Activated CD4-positive, alpha-beta T cell treated with anti-CD3 and anti-CD28 coated beads for 36 hours (primary cell): ENCODE measurements at regions of chr18 and their contacts with region 1.

Region 1: DNA sequence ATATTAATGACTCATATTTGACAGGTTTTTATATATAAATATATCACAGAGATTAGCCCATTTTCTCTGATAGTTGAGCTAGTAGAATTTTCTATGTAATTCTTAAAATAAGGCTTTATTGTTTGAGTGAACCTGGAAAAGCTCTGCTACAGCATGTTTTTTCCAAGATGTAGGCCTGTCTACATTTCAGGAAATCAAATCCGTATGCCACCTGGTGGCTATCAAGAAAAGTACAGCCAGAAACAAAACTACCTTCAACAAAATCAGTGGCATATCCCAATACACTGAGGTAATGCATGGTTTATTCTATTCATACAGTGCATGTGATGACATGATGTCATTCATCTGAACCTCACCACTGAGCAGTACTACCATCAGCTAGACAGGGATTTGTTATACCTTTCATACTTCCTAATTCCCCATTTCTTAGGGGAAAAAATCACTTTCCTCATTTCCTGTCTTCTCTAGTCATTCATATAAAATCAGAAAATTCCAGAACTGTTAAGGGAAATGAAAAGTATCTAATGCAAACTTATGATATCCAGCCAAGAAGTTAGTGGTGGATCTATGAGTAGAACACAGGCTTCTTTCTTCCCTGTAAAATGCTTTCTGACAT is 310.4 kb upstream of the SYT4 start:
- DNase-seq: no peak
- ATAC-seq: peak; percentile 36
- H3K4me3 Mint-ChIP-seq: no peak overlapping the region
- H3K27ac Mint-ChIP-seq: no peak overlapping the region
- H3K4me1 Mint-ChIP-seq: no peaks in the 10 kb centered on the region
- H3K27me3 Mint-ChIP-seq: no peaks in the 10 kb centered on the region

Region 2: DNA sequence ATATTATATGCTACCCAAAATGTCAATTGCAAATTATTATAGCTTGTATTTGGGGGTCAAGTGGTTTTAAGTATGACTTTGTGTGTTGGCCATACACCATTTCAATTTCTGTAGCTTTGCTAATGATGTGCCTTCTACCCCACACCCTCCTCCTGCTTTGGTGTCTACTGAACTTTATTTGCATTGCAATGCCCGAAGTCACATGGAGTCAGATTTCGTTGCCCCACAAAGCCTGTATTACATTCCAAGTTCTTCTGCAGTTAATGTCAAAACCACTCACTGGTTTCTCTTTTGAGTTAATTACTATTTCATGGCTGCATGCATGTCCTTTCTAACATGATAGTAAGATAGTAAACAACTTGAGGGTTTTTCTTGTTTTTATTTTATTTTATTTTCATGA is 1001.0 kb before region 1 on chr18:
- CTCF ChIA-PET with region 1: no interaction called
- POLR2A ChIA-PET with region 1: no interaction called
- intact Hi-C with region 1: loop called in 1 of 2 experiments (anchors 10 kb)
- DNase-seq: no peak
- ATAC-seq: no peak
- H3K4me3 Mint-ChIP-seq: no peak overlapping the region
- H3K27ac Mint-ChIP-seq: no peak overlapping the region
- H3K4me1 Mint-ChIP-seq: no peaks in the 10 kb centered on the region
- H3K27me3 Mint-ChIP-seq: no peaks in the 10 kb centered on the region

Region 3: DNA sequence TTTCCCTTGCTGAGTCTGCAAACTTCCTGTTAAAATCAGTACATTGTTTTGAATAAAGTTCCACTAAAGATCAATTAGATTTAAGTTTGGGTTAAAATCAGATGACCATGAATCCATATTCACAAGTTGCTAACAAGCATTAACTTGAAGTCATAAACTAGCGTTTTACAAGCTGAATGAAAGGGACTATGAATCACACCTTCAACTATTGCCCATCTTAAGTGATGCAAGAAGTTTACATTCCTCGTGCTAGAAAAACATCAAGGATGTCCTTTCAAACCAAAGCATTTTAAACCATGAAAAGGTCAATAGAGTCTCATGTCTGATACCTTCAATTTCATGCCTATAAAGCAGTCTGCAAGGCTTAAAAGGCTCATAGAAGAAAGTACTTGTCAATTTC is 53.1 kb before region 1 on chr18:
- CTCF ChIA-PET with region 1: no interaction called
- POLR2A ChIA-PET with region 1: no interaction called
- intact Hi-C with region 1: no loop called
- DNase-seq: no peak
- ATAC-seq: no peak
- H3K4me3 Mint-ChIP-seq: no peak overlapping the region
- H3K27ac Mint-ChIP-seq: no peak overlapping the region
- H3K4me1 Mint-ChIP-seq: no peaks in the 10 kb centered on the region
- H3K27me3 Mint-ChIP-seq: no peaks in the 10 kb centered on the region

Region 4: DNA sequence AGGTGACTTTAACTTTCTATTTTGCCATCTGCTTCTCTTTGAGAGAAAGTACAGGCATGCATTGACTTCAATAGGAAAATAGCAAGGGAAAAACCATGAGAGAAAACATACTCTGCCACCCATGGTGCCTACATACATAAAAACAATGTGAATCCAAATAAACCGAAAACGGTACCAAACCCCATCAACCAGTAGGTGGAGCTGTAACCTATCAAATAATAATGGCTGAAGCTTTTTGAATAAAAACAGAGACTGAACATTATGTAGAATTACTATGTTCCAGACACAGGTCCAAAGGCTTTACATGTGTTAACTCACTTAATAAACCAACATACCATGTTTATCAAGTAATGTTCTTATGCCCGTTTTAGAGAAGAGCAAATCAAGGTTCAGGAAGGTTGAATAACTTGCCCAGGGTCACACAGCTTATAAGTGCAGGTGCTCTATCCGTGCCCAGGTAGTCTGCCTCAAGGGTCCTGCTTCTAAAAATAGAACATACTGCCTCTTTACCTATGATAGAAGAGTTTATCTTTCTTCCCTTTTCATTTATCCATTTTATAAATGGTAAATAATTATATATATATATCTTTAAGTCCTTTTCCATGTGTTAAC is 16.5 kb before region 1 on chr18:
- CTCF ChIA-PET with region 1: interaction called, 45 read pairs
- POLR2A ChIA-PET with region 1: no interaction called
- intact Hi-C with region 1: loop called (anchors 1 kb)
- DNase-seq: peak; percentile 29
- ATAC-seq: no peak
- H3K4me3 Mint-ChIP-seq: no peak overlapping the region
- H3K27ac Mint-ChIP-seq: no peak overlapping the region
- H3K4me1 Mint-ChIP-seq: no peaks in the 10 kb centered on the region
- H3K27me3 Mint-ChIP-seq: no peaks in the 10 kb centered on the region